Activated CD4-positive, alpha-beta T cell treated with anti-CD3 and anti-CD28 coated beads, Interleukin-2, amount 10 ng/mL, durations not matched to agents 24 days and 14 days (primary cell): ENCODE measurements at regions of chr4 and their contacts with region 1.

Region 1: DNA sequence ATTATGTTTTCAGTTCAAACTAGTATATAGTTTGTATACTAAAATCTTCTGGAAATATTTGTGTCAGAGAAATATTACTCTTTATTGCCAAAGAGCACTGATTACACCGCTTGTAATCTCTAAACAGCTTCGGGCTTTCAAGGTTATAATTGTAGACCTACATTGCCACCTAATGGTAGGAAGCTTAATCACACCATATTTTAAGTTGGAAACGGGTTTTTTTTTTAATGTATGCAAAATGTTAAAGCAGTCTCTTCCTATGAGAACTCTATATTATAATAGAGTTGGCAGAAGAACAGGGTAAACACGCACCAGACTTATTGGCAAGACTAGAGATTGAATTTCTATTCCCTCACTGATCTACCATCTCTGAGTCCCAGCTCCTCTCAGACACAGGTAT is 19.5 kb upstream of the NFXL1 start:
- DNase-seq: no peak
- H3K4me3 Mint-ChIP-seq: no peak overlapping the region
- H3K27ac Mint-ChIP-seq: no peak overlapping the region
- H3K4me1 Mint-ChIP-seq: peaks cover 1% of the 10 kb centered on the region
- H3K27me3 Mint-ChIP-seq: peaks cover 16% of the 10 kb centered on the region

Region 2: DNA sequence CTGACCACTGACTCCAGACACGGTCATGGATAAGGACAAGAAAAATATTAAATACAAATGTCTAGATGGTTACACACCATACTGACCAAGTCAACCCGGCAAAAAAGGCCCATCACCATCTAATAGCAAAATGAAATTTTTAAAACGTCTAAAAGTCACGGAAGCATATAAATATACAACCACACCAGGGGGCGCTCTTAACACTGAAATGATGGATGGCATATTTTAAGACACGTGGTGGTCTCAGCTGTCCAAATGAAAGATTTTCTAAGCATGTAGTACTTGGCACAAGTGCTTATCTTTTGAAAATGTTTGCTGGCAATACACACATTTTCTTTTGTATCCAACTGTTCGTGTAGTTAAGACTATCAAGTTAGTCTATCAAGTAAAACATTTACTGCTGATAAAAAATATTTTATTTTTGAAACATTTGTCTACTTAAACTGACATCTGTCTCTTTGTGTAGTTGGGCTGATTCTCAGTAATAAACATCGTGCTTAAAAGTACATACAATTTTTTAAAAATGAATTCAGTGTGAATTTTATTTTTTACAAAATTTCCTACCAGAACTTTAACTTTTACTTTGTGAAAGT is 1089.4 kb before region 1 on chr4:
- intact Hi-C with region 1: loop called (anchors 5 kb)
- DNase-seq: peak; percentile 81
- H3K4me3 Mint-ChIP-seq: no peak overlapping the region
- H3K27ac Mint-ChIP-seq: no peak overlapping the region
- H3K4me1 Mint-ChIP-seq: no peaks in the 10 kb centered on the region
- H3K27me3 Mint-ChIP-seq: no peaks in the 10 kb centered on the region

Region 3: DNA sequence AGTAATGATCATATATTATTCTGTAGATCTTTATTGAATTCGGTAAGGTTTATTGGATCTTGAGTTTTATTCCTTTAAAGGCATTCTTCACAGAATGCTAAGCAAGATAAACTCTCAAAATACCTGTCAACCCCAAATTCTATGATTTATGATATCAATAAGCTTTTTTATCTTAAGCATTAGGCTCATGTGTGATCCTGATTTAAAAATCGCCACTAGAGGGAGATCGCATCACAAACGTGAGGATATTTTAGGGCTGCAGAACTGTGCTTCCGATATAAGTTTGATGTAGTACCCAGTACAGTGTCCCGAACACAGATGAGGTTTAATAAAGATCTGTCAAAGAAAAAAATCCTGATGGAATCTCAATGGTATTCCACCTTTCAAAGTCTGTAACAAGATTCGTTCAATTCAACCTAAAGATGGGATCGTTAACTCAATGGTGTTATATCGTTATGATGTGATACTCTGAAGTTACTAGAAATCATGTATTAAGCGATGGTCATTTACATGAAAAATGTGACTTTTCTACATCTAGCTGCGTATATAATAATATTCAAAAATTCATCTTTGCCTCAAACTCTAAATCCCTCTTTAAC is 264.9 kb before region 1 on chr4:
- intact Hi-C with region 1: loop called (anchors 1 kb)
- DNase-seq: peak; percentile 77
- H3K4me3 Mint-ChIP-seq: no peak overlapping the region
- H3K27ac Mint-ChIP-seq: no peak overlapping the region
- H3K4me1 Mint-ChIP-seq: no peaks in the 10 kb centered on the region
- H3K27me3 Mint-ChIP-seq: peaks cover 18% of the 10 kb centered on the region

Region 4: DNA sequence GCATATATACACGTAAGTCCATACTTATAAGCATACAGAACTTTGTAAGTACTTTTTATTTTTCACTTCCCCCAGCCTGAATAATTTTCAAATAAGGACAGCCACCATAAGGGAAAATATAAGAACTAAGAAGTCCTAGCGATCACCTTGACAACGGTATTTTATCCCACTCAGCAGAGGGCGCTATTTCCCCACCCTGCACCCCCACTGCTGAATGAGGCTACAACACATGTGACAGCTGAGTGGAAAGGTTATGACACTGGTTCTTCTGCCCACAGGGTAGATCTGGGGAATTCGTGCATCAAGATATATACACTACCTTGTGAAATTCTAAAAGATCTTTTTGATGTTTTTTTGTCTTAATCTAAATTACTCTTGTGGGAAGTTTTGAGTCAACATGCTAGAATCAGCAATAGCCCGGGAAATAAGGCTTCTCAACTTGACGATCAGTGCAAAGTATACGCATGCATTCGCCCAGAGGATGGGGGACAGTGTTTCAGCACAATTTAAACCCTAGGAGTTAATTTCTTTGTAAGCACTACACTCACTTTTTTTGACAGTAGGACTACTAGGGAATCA is 247.5 kb before region 1 on chr4:
- intact Hi-C with region 1: loop called (anchors 1 kb)
- DNase-seq: peak; percentile 88
- H3K4me3 Mint-ChIP-seq: no peak overlapping the region
- H3K27ac Mint-ChIP-seq: no peak overlapping the region
- H3K4me1 Mint-ChIP-seq: peaks cover 3% of the 10 kb centered on the region
- H3K27me3 Mint-ChIP-seq: peaks cover 17% of the 10 kb centered on the region

Region 5: GRCh38 chr4:47814618-47815295 is 119.1 kb before region 1 on chr4:
- intact Hi-C with region 1: no loop called
- DNase-seq: no peak
- H3K4me3 Mint-ChIP-seq: no peak overlapping the region
- H3K27ac Mint-ChIP-seq: no peak overlapping the region
- H3K4me1 Mint-ChIP-seq: peaks cover 4% of the 10 kb centered on the region
- H3K27me3 Mint-ChIP-seq: peaks cover 22% of the 10 kb centered on the region

Region 6: DNA sequence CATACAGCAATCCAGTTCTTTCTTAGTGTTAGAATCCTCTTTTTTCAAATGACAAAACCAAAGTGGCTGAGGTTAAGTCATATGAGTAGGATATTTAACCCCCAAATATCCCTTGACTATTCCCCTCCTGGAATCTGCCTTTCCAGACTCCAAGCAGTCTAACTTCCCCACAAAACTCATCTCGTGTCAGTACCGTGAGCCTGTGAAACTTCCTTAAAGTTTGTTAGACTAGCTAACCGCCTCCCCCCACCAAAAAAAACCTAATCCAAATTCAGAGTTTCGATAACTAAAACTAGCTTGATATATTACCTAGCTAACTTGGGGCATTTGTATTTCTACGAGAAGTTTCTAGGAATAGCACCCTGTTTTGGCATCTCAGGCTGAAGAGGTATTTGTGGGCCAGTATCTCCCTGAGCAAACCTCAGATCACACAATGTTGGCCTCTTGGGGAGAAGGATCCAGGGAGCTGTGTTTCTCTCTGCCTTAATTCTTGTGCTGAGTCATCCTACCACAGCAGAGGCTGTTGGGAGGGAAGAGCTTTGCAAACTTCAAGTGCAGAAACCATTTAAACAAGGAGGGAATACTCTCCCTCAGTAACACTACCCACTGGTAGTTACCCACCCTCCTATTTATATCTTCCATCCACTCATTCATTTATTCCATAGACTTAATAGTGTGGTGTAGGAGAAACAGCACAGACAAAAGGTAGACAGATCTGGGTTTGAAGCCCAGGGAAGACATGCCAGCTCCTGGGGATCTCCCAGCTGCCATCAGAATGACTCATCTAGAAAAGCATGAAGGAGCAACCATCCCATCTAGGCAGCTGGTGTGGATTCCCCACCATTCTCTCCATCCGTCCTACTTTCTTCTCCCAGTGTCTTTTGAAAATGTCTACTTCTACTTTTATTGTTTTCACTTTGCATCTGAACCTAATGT is 239.5 kb after region 1 on chr4:
- intact Hi-C with region 1: no loop called
- DNase-seq: no peak
- H3K4me3 Mint-ChIP-seq: no peak overlapping the region
- H3K27ac Mint-ChIP-seq: no peak overlapping the region
- H3K4me1 Mint-ChIP-seq: peaks cover 11% of the 10 kb centered on the region
- H3K27me3 Mint-ChIP-seq: no peaks in the 10 kb centered on the region

Region 7: GRCh38 chr4:48594180-48594579 is 660.3 kb after region 1 on chr4:
- intact Hi-C with region 1: no loop called
- DNase-seq: no peak
- H3K4me3 Mint-ChIP-seq: no peak overlapping the region
- H3K27ac Mint-ChIP-seq: no peak overlapping the region
- H3K4me1 Mint-ChIP-seq: peaks cover 5% of the 10 kb centered on the region
- H3K27me3 Mint-ChIP-seq: no peaks in the 10 kb centered on the region